Activated T-helper 2 cell treated with anti-CD3 and anti-CD28 coated beads, Interferon-gamma antibody, Interleukin-2, Interleukin-4, amounts not matched to agents 10 μg/mL and 5 μg/mL and 100 μg/mL, durations not matched to agents 14 hours and 24 hours and 36 hours (primary cell): ENCODE measurements at regions of chr2 and their contacts with region 1.

Region 1: GRCh38 chr2:206085742-206086445 is at the start of gene INO80D:
- DNase-seq: peak; percentile 75
- H3K4me3 Mint-ChIP-seq: peak within 1 kb of the TSS; percentile 97
- H3K27ac Mint-ChIP-seq: peak within 1 kb of the TSS; percentile 100
- H3K4me1 Mint-ChIP-seq: peaks cover 19% of the 10 kb centered on the region
- H3K27me3 Mint-ChIP-seq: no peaks in the 10 kb centered on the region
- total RNA-seq, gene INO80D: 21.9 and 26.0 TPM in 2 replicates

Region 2: DNA sequence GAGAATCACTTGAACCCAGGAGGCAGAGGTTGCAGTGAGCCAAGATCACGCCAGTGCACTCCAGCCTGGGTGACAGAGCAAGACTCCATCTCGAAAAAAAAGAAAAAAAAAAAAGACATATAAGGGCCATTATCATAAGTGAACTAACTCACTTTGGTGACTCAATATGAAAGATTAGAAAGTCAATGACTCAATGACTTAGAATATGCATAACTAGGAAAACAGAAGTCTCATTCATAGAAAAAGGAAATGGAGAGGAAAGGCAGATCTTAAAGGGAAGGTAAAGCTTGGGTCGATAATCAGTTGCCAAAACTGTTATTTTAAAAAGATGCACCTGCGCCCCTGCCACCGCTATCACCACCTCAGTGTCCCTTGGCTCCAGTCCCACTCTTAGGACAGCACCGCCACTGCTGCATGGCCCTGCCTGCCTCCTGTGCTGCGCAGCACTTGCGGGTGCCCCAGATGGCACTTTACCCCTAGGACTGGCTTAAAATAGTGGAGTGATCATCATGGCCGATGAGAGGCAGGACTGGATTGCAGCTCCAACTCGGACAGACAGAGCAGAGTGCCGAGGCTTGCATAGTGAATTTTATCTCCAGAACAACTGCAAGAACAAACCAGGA is 54.6 kb before region 1 on chr2:
- intact Hi-C with region 1: loop called (anchors 5 kb)
- DNase-seq: no peak
- H3K4me3 Mint-ChIP-seq: no peak overlapping the region
- H3K27ac Mint-ChIP-seq: peak overlapping the region; percentile 33
- H3K4me1 Mint-ChIP-seq: peaks cover 44% of the 10 kb centered on the region
- H3K27me3 Mint-ChIP-seq: no peaks in the 10 kb centered on the region

Region 3: GRCh38 chr2:206159346-206160124 is 73.6 kb after region 1 on chr2 and contains the starts of genes EEF1B2 and NDUFS1:
- intact Hi-C with region 1: loop called (anchors 1 kb)
- DNase-seq: peak; percentile 96
- H3K4me3 Mint-ChIP-seq: peak within 1 kb of the TSS; percentile 98
- H3K27ac Mint-ChIP-seq: peak within 1 kb of the TSS; percentile 98
- H3K4me1 Mint-ChIP-seq: peaks cover 36% of the 10 kb centered on the region
- H3K27me3 Mint-ChIP-seq: no peaks in the 10 kb centered on the region
- total RNA-seq, gene EEF1B2: 719 and 724 TPM in 2 replicates
- total RNA-seq, gene NDUFS1: 80.7 and 84.3 TPM in 2 replicates

Region 4: GRCh38 chr2:206274434-206275268 is 188.8 kb after region 1 on chr2 and contains the start of gene ZDBF2:
- intact Hi-C with region 1: loop called (anchors 10 kb)
- DNase-seq: peak; percentile 48
- H3K4me3 Mint-ChIP-seq: peak within 1 kb of the TSS; percentile 87
- H3K27ac Mint-ChIP-seq: peak within 1 kb of the TSS; percentile 82
- H3K4me1 Mint-ChIP-seq: peaks cover 16% of the 10 kb centered on the region
- H3K27me3 Mint-ChIP-seq: peaks cover 64% of the 10 kb centered on the region
- total RNA-seq, gene ZDBF2: 10.8 TPM in 2 replicates

Region 5: GRCh38 chr2:206765242-206766056 is 679.6 kb after region 1 on chr2 and contains the starts of genes FASTKD2 and MDH1B:
- intact Hi-C with region 1: loop called (anchors 10 kb)
- DNase-seq: peak; percentile 80
- H3K4me3 Mint-ChIP-seq: peak within 1 kb of the TSS; percentile 94
- H3K27ac Mint-ChIP-seq: peak within 1 kb of the TSS; percentile 97
- H3K4me1 Mint-ChIP-seq: peaks cover 29% of the 10 kb centered on the region
- H3K27me3 Mint-ChIP-seq: peaks cover 3% of the 10 kb centered on the region
- total RNA-seq, gene FASTKD2: 34.5 and 34.7 TPM in 2 replicates
- total RNA-seq, gene MDH1B: 0.25 and 0.55 TPM in 2 replicates